K562 (cell line): ENCODE measurements at regions of chr12 and their contacts with region 1.

Region 1: DNA sequence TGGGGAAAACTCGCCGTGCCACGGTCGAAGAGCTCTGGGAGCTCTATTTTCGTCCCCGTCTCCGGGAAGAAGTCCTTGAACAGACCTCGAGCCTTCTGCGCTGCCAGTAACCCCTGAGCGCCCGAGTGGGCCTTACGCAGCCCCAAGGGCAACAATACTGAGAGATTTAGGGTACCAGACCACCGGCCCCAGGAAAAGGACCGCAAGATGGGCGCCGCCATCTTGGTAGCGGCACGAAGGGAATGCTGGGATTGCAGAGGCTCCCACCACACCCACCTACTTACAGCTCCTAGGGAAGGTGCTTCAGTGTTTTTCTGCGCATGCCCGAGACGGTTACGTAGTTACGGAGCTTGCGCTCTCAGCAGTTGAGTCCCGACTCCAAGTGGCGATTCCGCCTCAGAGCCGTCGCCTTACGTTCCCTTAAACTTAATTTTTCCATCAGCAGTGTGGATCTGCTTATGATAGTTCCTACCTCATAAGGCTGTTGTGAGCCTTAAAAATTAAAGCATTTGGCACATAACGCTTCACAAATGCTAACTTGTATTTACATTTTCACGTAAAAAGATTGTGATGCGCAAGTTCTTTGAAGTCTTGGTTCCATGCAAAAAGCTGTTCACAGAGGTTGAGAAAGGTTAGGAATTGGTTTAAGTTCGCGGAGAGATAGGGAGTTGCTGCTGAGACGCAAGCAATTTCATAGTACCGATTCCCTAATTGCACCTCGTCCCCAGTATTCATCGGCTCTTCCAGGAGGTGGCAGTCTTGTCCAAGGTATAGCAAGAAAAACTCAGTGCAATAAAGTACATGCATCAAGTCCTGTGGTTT is at the start of gene YARS2:
- DNase-seq: peak; percentile 83 to 98 (median 88)
- ATAC-seq: peak; percentile 95
- H3K4me3 ChIP-seq: peak within 1 kb of the TSS; percentile 73
- H3K27ac ChIP-seq: peak within 1 kb of the TSS; percentile 69
- H3K4me1 ChIP-seq: peaks cover 4 to 5% of the 10 kb centered on the region in 2 experiments; a peak in 1 of 5 replicates
- H3K27me3 ChIP-seq: no peaks in the 10 kb centered on the region
- CTCF ChIP-seq: peak; percentile 74 to 90 (median 89)
- EP300 ChIP-seq: no peak
- POLR2A ChIP-seq: peak; percentile 97
- RAD21 ChIP-seq: peak; percentile 95 to 97
- polyA plus RNA-seq, gene YARS2: 15.2 to 18.4 TPM

Region 2: GRCh38 chr12:32644431-32644830 is 111.4 kb before region 1 on chr12:
- CTCF ChIA-PET with region 1: no interaction called
- POLR2A ChIA-PET with region 1: no interaction called
- in situ Hi-C with region 1: no loop called
- intact Hi-C with region 1: no loop called
- DNase-seq: peak; percentile 15 to 34 (median 24)
- ATAC-seq: no peak
- H3K4me3 ChIP-seq: no peak overlapping the region
- H3K27ac ChIP-seq: no peak overlapping the region
- H3K4me1 ChIP-seq: no peaks in the 10 kb centered on the region
- H3K27me3 ChIP-seq: peaks cover 10 to 34% of the 10 kb centered on the region in 2 experiments; a peak in 4 of 5 replicates
- CTCF ChIP-seq: no peak
- EP300 ChIP-seq: peak; percentile 54
- POLR2A ChIP-seq: no peak
- RAD21 ChIP-seq: no peak

Region 3: GRCh38 chr12:32785557-32785956 is 29.7 kb after region 1 on chr12:
- CTCF ChIA-PET with region 1: no interaction called
- POLR2A ChIA-PET with region 1: no interaction called
- in situ Hi-C with region 1: no loop called
- intact Hi-C with region 1: no loop called
- DNase-seq: no peak
- ATAC-seq: no peak
- H3K4me3 ChIP-seq: no peak overlapping the region
- H3K27ac ChIP-seq: no peak overlapping the region
- H3K4me1 ChIP-seq: no peaks in the 10 kb centered on the region
- H3K27me3 ChIP-seq: no peaks in the 10 kb centered on the region; a peak in 1 of 5 replicates
- CTCF ChIP-seq: no peak
- EP300 ChIP-seq: no peak
- POLR2A ChIP-seq: no peak
- RAD21 ChIP-seq: no peak

Region 4: DNA sequence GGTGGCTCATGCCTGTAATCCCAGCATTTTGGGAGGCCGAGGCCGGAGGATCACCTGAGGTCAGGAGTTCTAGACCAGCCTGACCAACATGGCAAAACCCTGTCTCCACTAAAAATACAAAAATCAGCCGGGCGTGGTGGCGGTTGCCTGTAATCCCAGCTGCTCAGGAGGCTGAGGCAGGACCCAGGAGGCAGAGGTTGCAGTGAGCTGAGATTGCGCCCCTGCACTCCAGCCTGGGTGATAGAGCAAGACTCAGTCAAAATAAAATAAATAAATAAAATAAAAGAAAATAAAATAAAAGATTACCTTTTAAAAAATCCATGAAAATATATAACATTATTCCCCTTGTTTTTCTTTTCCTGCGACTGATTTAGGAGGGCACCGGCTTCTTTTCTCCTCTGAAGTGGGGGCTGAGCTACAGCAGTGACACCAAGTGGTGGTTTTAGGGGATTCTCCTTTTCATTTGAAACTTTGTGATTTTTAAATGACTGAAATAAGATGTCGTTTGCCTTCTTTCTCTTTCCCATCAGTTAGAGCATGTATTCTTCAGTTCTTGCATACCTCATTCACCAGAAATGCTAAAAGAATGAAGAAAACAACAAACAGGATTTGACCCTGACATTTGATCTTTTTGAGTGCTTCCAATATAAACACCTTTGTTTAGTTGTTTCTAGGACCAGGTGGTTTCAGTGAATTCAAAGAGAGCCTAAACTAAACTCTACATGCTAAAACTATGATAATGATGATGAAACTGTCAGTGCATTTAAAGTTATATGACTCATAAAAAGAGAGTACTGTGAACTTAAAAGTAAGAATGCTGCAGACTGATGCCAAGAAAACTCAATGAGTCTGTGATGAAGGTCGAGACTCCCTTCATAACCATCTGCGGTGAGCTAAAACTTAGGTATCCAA is 163.3 kb after region 1 on chr12:
- CTCF ChIA-PET with region 1: interaction called, 10 read pairs
- POLR2A ChIA-PET with region 1: interaction called, 4 read pairs
- in situ Hi-C with region 1: no loop called
- intact Hi-C with region 1: loop called (anchors 1 kb)
- DNase-seq: peak; percentile 17 to 28 (median 22)
- ATAC-seq: peak; percentile 71; the same call in 2 of the 3 replicates
- H3K4me3 ChIP-seq: no peak overlapping the region
- H3K27ac ChIP-seq: no peak overlapping the region
- H3K4me1 ChIP-seq: no peaks in the 10 kb centered on the region
- H3K27me3 ChIP-seq: no peaks in the 10 kb centered on the region
- CTCF ChIP-seq: peak; percentile 45 to 58 (median 54); a peak in 5 of 6 replicates
- EP300 ChIP-seq: no peak
- POLR2A ChIP-seq: no peak
- RAD21 ChIP-seq: peak; percentile 51 to 68

Region 5: DNA sequence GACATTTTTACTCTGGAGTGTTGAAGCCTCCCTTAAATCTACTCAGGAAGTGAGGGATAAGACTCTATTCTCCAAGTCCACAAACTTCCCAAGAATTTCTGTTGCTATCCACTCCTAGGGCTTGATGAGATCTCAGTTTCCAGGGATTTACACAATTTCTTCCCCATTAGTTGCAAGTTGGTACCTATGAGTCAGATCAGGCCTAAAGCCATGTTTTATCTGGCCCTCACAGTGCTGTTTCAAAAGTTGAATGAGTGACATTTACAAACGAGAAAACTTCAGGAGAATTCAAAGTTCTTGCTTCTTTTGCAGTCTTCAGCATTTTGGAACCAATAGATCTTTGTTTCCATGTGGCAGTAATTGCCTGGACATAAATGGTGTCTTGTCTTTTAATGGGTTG is 840.2 kb after region 1 on chr12:
- CTCF ChIA-PET with region 1: no interaction called
- POLR2A ChIA-PET with region 1: no interaction called
- in situ Hi-C with region 1: no loop called
- intact Hi-C with region 1: loop called (anchors 10 kb)
- DNase-seq: peak in 1 of 4 experiments; percentile 45
- ATAC-seq: peak; percentile 28; the same call in 1 of the 3 replicates
- H3K4me3 ChIP-seq: no peak overlapping the region
- H3K27ac ChIP-seq: peak overlapping the region; percentile 7; the same call in 1 of the 3 replicates
- H3K4me1 ChIP-seq: peaks cover 0 to 34% of the 10 kb centered on the region in 2 experiments; a peak in 3 of 5 replicates
- H3K27me3 ChIP-seq: no peaks in the 10 kb centered on the region
- CTCF ChIP-seq: no peak
- EP300 ChIP-seq: peak; percentile 51; the same call in 1 of the 2 replicates
- POLR2A ChIP-seq: no peak
- RAD21 ChIP-seq: no peak